SK-N-SH (cell line): ENCODE measurements at regions of chr14 and their contacts with region 1.

Region 1: DNA sequence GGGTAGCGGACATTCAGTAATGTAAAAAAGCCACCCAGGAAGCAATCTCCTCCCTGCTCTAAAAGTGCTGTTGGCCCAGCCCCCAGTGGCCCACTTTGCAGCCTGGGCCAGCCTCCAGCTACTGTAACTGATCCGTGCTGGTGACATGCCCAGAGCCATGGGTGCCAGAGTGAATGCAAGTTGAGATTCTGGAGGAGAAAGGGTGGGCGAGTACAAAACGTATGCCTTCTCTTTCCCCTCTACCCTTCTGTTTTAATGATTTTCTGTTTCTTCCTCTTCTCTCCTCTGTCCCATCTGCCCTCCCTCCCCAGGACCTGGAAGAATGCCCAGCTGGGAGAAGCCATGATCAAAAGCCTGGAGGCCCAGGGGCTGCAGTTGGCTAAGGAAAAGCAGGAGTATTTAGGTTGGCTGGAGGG is 16.9 kb downstream of the PLEKHD1 start:
- DNase-seq: peak; percentile 57
- H3K4me3 ChIP-seq: no peak overlapping the region
- H3K27ac ChIP-seq: peak overlapping the region in 1 of 2 experiments; percentile 50; a peak in 2 of 4 replicates
- H3K4me1 ChIP-seq: peaks cover 0 to 44% of the 10 kb centered on the region in 2 experiments; a peak in 2 of 4 replicates
- H3K27me3 ChIP-seq: no peaks in the 10 kb centered on the region
- CTCF ChIP-seq: no peak
- EP300 ChIP-seq: no peak
- RAD21 ChIP-seq: no peak

Region 2: DNA sequence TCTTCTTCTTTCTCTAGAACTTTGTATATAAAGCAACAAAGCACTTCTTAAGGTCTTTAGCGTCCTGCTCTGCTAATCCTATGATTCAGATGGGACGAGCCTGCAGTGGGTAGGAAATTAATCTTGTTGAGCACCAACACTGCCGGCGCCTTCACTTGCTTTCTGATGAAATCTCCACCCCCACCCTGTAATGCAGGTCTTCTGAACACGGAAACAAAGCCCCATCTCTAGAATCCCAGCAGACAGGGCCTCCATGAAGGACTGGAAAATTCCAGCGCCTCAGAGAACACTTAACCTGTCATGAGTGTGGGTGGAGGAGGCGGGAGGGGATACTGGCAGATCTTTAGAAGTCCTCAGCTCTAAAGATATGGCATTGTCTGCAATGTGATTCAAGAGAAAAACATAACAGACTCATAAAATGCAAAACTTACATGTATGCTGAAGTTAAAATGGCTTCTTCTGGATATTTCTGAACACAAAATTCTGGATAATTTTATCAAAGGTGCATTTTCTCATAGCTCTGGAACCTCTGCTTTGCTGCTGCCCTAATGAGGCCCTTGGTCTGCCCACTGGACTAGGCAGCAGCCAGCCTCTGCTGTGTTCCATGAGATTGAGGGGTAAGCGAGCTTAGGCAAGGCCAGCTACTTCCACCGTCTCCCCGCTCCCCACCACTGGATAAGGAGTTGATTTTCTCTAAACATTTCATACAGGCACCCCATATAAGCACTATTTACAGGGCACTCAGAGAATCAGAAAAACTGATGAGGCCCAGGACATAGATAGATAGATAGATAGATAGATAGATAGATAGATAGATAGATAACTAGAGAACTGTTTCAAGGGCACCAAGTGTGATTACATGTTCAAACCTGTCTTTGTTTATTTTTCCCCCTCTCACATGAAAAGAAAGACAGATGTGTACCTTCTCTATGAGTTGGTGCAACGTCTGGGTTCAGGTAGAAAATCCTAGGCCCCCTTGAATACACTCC is 751.6 kb before region 1 on chr14:
- CTCF ChIA-PET with region 1: no interaction called
- POLR2A ChIA-PET with region 1: no interaction called
- DNase-seq: no peak
- H3K4me3 ChIP-seq: no peak overlapping the region
- H3K27ac ChIP-seq: no peak overlapping the region
- H3K4me1 ChIP-seq: no peaks in the 10 kb centered on the region; a peak in 1 of 4 replicates
- H3K27me3 ChIP-seq: no peaks in the 10 kb centered on the region
- CTCF ChIP-seq: no peak
- EP300 ChIP-seq: no peak
- RAD21 ChIP-seq: no peak

Region 3: DNA sequence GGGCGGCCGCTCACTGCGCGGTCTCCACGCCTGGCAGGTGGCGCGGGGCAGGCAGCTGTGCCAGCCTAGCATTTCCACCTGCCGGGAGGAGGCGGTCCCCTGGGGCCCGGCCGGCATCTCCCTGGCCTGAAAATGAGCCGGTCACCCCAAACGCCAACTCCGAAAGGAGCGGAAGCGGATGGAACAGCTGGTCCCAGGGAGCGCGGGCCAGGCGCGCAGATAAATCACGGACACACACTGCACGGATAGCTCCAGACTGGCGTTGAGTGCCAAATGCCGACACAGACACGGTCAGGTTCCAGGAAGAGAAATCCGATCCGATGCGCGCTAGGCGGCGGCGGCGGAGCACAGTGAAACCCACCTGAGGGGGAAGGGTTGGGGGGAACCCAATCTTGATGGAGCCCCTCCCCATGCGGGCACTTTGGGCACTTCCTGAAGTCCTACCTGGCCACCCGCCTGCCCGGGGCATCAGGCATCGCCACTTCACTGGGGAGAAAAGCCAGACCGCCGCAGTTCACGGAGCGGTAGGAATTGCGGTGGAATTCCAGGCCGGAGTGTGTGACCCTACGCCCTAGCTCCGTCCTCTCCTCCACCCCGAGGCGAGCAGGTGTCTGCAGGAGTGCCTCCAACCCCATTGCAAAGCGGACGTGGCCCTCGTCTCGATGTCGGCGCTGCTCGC is 17.5 kb before region 1 on chr14:
- CTCF ChIA-PET with region 1: interaction called, 13 read pairs
- POLR2A ChIA-PET with region 1: no interaction called
- DNase-seq: peak; percentile 82
- H3K4me3 ChIP-seq: peak overlapping the region; percentile 48 to 54
- H3K27ac ChIP-seq: no peak overlapping the region
- H3K4me1 ChIP-seq: peaks cover 0 to 26% of the 10 kb centered on the region in 2 experiments; a peak in 2 of 4 replicates
- H3K27me3 ChIP-seq: peaks cover 37% of the 10 kb centered on the region
- CTCF ChIP-seq: no peak
- EP300 ChIP-seq: no peak
- RAD21 ChIP-seq: no peak